ENCODE measurements at regions of chr10 and their contacts with region 1.

Region 1: DNA sequence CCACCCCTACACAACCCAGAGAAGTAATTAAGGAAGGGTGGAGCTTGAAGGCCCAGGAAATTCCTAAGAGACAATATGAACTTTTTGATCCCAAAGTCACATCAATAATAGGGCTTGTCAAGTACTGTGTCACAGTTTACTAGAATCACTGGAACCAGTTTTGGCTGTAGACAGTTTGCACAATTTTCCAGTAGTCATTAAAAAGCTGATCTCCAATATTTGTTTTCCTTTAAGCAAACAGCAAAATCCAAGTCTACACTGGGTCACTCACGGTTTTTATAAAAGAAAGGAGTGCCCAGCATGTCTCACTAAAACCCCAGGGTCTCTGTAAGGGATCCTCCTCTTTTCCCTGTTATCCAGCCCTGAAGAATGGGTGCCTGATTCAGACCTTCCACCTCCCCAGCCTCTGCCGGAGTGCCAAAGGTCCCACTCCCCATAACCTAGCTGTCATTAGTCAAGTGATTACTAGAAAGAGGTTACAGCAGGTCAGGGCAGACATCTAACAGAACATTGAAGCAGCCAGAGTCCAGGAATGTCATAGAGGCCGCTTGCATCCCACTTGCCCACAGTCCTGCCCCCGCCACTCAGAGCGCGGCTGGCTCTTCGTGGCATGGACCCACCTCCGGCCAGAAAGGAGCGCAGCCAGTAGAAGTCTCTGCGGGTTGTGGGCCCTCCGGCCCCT is 556 bp downstream of the SLC25A16 start:
- DNase-seq: no peak
- H3K4me3 ChIP-seq: peak overlapping the region; percentile 80 to 92 (median 88)
- H3K27ac ChIP-seq: peak overlapping the region; percentile 93 to 96 (median 94)
- H3K4me1 ChIP-seq: peaks cover 0 to 13% (median 8%) of the 10 kb centered on the region in 4 donors
- H3K27me3 ChIP-seq: no peaks in the 10 kb centered on the region
- CTCF ChIP-seq: no peak
- EP300 ChIP-seq: no peak
- POLR2A ChIP-seq: no peak

Region 2: DNA sequence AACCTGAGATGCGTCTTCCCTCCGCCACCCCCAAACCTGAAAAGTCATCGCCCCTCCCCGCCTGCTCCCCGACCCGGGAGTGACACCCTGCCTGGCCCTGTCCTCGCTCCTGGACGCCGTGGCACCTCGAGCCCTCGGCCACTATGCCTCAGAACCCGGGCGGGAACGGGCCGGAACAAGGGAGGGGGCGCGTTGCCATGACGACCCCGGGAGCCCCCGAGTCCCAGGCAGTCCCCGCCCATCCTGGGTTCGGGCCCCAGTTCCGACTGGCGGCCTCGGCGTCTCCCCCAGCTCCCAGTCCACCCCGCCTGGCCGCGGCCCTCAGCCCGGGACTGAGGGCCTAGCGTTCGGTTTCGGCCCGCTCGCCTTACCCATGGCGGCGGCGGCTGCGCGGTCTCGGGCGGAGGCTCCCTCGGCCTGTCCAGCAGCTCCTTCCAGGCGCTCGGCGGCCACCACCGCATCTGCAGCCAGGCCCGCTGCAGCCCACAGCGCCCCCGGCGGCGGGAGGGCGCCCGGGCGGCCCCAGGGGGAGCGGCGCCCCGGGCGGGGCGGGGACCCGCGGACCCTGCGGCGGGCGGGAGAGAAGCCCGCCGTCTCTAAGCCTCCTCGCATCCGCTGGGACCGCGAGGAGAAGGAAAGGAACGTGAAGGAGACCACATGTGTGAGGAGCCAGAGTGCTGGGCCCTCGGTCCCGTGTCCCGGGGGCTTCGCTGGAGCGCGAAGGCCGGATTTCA is 119.8 kb before region 1 on chr10 and contains the start of gene RUFY2:
- intact Hi-C with region 1: loop called (anchors 5 kb)
- DNase-seq: peak; percentile 87
- H3K4me3 ChIP-seq: peak within 1 kb of the TSS; percentile 94 to 98 (median 97)
- H3K27ac ChIP-seq: peak within 1 kb of the TSS; percentile 92 to 97 (median 96)
- H3K4me1 ChIP-seq: peaks cover 0 to 16% (median 9%) of the 10 kb centered on the region in 4 donors
- H3K27me3 ChIP-seq: no peaks in the 10 kb centered on the region
- CTCF ChIP-seq: peak in 3 of 4 experiments; percentile 40 to 76 (median 41)
- EP300 ChIP-seq: no peak
- POLR2A ChIP-seq: no peak
- total RNA-seq, gene RUFY2: 19.3 to 34.9 (median 26.7) TPM

Region 3: DNA sequence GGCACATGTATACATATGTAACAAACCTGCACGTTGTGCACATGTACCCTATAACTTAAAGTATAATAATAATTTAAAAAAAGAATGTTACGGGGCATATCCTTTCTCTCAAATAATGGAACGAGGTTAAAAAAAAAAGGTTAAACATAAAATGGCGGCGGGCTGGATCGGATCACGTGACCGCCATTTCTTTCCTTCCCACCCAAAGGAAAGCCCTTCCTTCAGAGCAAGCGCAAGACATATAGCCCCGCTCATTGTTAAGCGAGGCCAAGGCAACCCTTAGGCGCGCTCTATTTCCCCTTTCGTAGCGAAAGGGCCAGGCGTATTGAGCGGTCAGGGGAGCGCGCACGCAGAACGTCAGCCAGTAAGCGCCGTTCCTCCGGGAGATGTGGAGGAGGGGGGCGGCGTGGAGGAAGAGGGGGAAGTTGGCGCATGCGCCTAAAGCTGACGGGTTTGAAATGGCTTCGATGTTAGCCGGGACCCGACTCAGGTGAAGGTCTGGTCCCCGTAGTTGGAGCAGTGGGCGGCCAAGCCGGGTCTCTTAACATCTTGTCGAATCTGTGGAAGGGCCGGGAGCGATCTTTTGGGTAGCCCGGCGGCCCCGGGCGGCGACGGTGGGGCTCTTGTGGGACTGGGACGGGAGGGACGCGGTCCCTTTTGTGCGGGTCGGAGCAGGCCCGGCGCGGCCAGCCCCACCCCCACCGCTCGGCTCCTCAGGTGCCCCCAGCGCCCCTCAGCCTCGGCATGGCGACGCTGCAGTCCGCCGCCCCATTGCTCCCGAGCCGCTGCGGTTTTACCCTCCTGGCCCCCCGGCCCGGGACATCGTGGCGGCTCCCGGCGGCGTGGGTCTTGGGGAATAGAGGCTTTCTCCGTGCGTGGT is 194.3 kb after region 1 on chr10 and contains the start of gene CCAR1:
- intact Hi-C with region 1: loop called (anchors 1 kb)
- DNase-seq: peak; percentile 98
- H3K4me3 ChIP-seq: peak within 1 kb of the TSS; percentile 83 to 99 (median 84)
- H3K27ac ChIP-seq: peak within 1 kb of the TSS; percentile 92 to 97 (median 95)
- H3K4me1 ChIP-seq: peaks cover 0 to 11% (median 9%) of the 10 kb centered on the region in 4 donors
- H3K27me3 ChIP-seq: no peaks in the 10 kb centered on the region
- CTCF ChIP-seq: no peak
- EP300 ChIP-seq: peak in 1 of 4 donors; percentile 15
- POLR2A ChIP-seq: peak; percentile 38 to 47
- total RNA-seq, gene CCAR1: 37.6 to 69.2 (median 45.8) TPM